Panc1 (cell line): ENCODE measurements at regions of chr15 and their contacts with region 1.

Region 1: DNA sequence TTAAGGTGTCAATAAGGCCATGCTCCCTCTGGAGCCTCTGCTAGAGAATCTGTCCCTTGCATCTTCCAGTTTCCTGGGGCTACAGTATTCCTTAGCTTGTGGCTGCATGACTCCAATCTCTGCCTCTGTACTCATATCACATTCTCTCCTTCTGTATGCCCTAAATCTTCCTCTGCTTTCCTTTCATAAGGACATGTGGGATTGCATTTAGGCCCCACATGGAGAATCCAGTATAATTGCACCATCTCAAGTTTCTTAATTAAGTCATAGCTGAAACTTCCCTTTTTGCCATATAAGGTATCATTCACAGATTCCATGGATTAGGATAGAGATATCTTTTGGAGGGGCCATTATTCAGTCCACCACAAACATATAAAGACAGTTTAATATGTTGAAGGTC is 409.8 kb upstream of the TMCO5A start:
- DNase-seq: no peak
- ATAC-seq: no peak
- H3K4me3 ChIP-seq: no peak overlapping the region
- H3K27ac ChIP-seq: no peak overlapping the region
- H3K4me1 ChIP-seq: no peaks in the 10 kb centered on the region
- H3K27me3 ChIP-seq: no peaks in the 10 kb centered on the region
- CTCF ChIP-seq: no peak

Region 2: GRCh38 chr15:37140531-37141058 is 384.0 kb before region 1 on chr15:
- CTCF ChIA-PET with region 1: no interaction called
- POLR2A ChIA-PET with region 1: no interaction called
- in situ Hi-C with region 1: no loop called
- intact Hi-C with region 1: no loop called
- DNase-seq: no peak
- ATAC-seq: no peak
- H3K4me3 ChIP-seq: no peak overlapping the region
- H3K27ac ChIP-seq: no peak overlapping the region
- H3K4me1 ChIP-seq: no peaks in the 10 kb centered on the region
- H3K27me3 ChIP-seq: no peaks in the 10 kb centered on the region; the same call in 1 of the 2 replicates
- CTCF ChIP-seq: no peak

Region 3: DNA sequence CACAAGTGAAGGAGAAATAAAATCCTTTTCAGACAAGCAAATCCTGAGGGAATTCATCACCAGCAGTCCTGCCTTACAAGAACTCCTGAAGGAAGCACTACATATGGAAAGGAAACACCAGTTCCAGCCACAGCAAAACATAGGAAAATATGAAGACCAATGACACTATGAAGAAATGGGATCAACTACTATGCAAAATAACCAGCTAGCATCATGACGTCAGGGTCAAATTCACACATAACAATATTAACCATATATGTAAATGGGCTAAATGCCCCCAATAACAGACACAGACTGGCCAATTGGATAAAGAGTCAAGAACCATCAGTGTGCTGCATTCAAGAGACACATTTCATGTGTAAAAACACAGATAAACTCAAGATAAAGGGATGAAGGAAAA is 21.0 kb before region 1 on chr15:
- CTCF ChIA-PET with region 1: no interaction called
- POLR2A ChIA-PET with region 1: interaction called, 10 read pairs
- in situ Hi-C with region 1: no loop called
- intact Hi-C with region 1: no loop called
- DNase-seq: no peak
- ATAC-seq: no peak
- H3K4me3 ChIP-seq: no peak overlapping the region
- H3K27ac ChIP-seq: no peak overlapping the region
- H3K4me1 ChIP-seq: no peaks in the 10 kb centered on the region
- H3K27me3 ChIP-seq: no peaks in the 10 kb centered on the region
- CTCF ChIP-seq: no peak

Region 4: DNA sequence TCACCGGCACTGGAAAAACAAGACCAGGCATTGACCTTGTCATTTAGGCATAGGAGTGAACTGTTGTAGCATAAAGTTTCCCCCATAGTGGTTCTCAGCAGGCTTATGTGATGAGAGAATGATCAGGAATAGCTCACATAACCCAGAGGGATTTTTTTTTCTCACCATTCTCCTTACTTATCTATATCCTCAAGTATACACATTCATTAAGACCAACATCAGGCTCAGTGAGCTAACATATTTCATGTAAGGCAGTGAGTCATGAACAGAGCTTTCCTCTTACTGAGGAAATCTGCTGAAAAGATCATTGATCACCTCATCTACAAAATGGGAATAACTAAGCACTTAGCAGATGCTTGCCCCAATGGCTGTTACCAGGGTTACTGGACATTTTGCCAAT is 13.2 kb after region 1 on chr15:
- CTCF ChIA-PET with region 1: no interaction called
- POLR2A ChIA-PET with region 1: interaction called, 13 read pairs
- in situ Hi-C with region 1: no loop called
- intact Hi-C with region 1: no loop called
- DNase-seq: no peak
- ATAC-seq: no peak
- H3K4me3 ChIP-seq: no peak overlapping the region
- H3K27ac ChIP-seq: no peak overlapping the region
- H3K4me1 ChIP-seq: no peaks in the 10 kb centered on the region
- H3K27me3 ChIP-seq: no peaks in the 10 kb centered on the region
- CTCF ChIP-seq: no peak